ENCODE measurements at regions of chr16 and their contacts with region 1.

Region 1: DNA sequence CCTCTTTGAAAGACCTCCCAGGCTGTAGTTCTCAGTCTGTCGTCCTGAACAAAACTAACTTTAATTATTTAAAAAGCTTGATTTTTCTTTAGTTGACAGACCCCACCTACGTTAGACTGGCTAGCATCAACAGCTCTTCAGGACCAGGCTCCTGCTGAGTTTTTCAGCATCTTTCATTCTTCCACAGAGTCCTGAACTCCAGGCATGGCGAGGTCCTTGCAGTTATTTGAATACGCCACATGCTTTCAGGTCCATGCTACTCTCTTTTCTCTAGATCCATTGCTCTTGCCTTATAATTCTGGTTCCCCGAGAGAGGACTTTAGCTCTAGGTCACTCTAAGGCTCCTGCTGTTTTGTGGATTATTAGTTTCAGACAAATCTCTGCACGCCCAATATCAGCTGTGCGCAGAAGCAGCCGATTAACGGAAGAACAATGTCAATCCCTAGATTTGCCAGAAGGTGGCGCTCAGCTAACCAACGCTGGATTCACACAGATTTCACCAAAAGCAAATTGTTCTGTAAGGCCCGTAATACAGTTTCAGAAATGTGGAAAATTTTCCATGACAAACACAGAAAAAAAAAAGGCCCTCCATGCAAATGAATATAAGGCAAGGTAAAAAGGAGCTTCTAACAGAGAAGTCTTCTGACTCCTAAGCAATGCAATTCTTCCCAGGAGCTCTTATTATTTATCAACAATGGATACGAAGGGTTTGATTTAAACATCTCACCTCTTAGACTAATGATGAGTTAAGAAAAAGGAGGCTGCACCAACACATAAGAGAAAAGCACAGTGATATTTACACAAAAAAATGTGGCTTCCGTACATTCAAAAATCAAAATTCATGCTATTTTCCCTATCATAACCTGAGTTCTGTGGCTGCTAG is 33.5 kb upstream of the BCO1 start:
- DNase-seq: no peak
- H3K4me3 ChIP-seq: no peak overlapping the region
- H3K27me3 ChIP-seq: peaks cover 4% of the 10 kb centered on the region
- CTCF ChIP-seq: peak; percentile 74

Region 2: DNA sequence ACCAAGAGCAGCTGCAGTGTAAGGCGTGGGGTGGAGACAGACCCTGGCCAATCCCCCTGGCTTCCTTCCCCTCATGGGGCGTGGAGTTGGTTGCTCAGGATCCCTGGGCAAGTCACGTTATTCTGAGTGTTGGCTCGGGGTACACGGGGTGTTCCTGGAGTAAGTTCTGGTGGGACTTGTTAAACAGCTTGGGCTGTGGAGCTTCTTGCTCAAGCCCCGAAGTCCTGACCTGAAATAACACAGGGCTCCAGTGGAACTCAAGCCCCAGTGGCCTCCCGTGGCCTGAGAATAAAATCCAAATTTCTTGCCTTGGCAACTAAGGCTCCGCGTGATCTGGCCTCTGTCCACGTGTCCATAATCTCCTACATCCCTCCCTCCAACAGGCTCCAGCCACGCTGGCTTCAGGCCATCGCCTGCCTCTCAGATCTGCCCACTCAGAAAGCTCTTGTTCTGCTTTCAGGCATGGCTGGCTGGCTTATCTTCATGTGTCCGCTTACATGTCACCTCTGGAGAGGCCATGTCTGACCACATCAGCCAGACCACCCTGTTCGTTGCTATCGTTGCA is 15.9 kb before region 1 on chr16:
- CTCF ChIA-PET with region 1: interaction called, 16 read pairs
- POLR2A ChIA-PET with region 1: no interaction called
- DNase-seq: no peak
- H3K4me3 ChIP-seq: no peak overlapping the region
- H3K27me3 ChIP-seq: peaks cover 1% of the 10 kb centered on the region; the same call in 1 of the 2 replicates
- CTCF ChIP-seq: no peak

Region 3: GRCh38 chr16:81251871-81252270 is 46.8 kb after region 1 on chr16:
- CTCF ChIA-PET with region 1: no interaction called
- POLR2A ChIA-PET with region 1: no interaction called
- DNase-seq: peak; percentile 50
- H3K4me3 ChIP-seq: no peak overlapping the region
- H3K27me3 ChIP-seq: no peaks in the 10 kb centered on the region; the same call in 1 of the 2 replicates
- CTCF ChIP-seq: no peak

Region 4: DNA sequence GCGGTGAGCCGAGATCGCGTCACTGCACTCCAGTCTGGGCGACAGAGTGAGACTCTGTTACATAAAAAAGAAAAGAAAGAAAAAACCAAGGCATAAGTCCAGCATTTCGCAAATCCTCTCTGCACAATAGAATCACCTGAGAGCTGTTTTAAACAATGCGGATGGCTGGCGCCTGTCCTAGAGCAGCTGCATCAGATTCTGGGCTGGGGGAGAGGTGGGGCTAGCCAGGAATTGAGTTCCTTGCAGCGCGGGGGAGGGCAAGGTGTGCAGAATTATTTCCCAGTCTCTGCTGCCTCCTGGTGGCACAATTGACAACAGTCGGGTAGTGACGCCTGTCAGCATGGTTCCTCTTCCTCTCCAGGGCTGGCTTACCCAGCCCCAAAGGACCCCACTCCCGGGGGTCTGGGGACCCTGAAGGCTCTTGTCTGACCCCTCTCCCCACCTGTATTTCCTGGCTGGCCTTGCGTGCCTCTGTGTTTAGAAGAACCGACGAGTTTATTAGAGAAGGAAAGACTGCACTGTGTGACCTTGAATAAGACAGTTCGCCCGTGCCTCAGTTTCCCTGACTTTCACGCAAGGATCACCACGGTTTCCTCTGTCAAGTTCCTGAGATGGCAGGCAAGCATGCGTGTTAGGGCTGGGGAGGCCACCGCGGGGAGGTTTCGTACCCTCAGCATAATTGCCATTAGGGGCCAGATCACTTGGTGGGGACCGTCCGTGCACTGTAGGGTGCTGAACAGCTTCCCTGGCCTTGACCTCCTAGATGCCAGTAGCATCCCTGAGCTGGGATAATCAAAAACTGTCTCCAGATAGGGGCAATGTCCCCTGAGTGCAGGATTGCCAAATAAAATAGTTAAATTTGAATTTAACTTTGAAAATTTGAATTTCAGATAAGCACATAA is 533.1 kb after region 1 on chr16:
- CTCF ChIA-PET with region 1: interaction called, 20 read pairs
- POLR2A ChIA-PET with region 1: no interaction called
- DNase-seq: peak; percentile 7
- H3K4me3 ChIP-seq: no peak overlapping the region; the same call in 1 of the 2 replicates
- H3K27me3 ChIP-seq: no peaks in the 10 kb centered on the region
- CTCF ChIP-seq: peak; percentile 85

Measured in BJ (cell line).